ENCODE measurements at regions of chr12 and their contacts with region 1.

Region 1: GRCh38 chr12:12786716-12787601 is 1.5 kb downstream of the APOLD1 start:
- DNase-seq: peak; percentile 75
- H3K4me3 Mint-ChIP-seq: peak overlapping the region; percentile 81
- H3K27ac Mint-ChIP-seq: peak overlapping the region; percentile 75
- H3K4me1 Mint-ChIP-seq: peaks cover 5% of the 10 kb centered on the region
- H3K27me3 Mint-ChIP-seq: no peaks in the 10 kb centered on the region
- CTCF ChIP-seq: peak; percentile 17

Region 2: DNA sequence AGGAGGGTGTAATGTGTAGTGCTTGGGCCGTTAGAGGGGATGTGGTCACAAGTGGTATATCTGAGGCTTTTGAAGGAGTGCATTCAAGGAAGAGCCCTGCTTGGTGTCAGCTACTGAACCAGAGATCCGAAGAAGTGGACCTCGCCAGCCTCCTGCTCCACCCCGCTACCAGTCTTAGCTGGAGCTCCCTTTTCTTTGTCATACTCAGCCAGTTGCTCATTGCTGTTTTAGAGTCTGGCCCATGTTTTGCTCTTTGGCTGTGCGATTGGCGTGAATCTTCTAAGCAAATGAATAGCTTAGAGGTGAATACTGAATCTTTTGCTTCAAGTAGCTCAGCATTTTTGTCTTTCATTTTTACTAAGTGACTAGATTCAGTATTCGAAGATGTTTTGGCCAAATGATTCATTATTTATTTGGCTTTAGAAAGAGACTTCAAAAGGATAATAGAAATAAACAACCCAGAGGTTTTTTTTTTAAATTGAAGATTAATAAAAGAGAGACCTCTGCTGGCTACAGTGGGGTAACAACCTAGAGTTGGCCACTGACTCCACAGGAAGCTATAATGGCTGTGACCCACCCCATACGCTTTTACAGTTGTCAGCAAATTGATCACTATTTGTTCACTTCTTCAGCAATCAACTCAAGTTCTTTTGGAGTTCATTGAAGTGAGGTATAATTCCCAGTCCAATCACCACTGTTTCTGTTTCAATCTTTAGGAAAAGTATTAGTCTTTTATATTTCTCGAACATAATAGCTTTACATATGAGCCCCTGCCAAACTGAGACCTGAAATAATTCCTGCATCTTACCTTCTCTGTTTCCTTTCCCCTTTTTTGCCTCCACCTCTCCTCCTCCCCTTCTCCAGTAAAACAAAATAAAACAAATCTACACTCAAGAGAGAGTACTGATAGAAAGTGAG is 49.9 kb before region 1 on chr12:
- CTCF ChIA-PET with region 1: interaction called, 12 read pairs
- POLR2A ChIA-PET with region 1: interaction called, 3 read pairs
- intact Hi-C with region 1: no loop called
- DNase-seq: peak; percentile 55
- H3K4me3 Mint-ChIP-seq: no peak overlapping the region
- H3K27ac Mint-ChIP-seq: peak overlapping the region; percentile 71
- H3K4me1 Mint-ChIP-seq: peaks cover 24% of the 10 kb centered on the region
- H3K27me3 Mint-ChIP-seq: no peaks in the 10 kb centered on the region
- CTCF ChIP-seq: peak; percentile 52

Region 3: GRCh38 chr12:12813120-12814101 is 26.5 kb after region 1 on chr12 and contains the start of gene DDX47:
- CTCF ChIA-PET with region 1: interaction called, 49 read pairs
- POLR2A ChIA-PET with region 1: interaction called, 45 read pairs
- intact Hi-C with region 1: loop called (anchors 1 kb)
- DNase-seq: peak; percentile 92
- H3K4me3 Mint-ChIP-seq: peak within 1 kb of the TSS; percentile 99
- H3K27ac Mint-ChIP-seq: peak within 1 kb of the TSS; percentile 99
- H3K4me1 Mint-ChIP-seq: peaks cover 27% of the 10 kb centered on the region
- H3K27me3 Mint-ChIP-seq: no peaks in the 10 kb centered on the region
- CTCF ChIP-seq: peak; percentile 90
- total RNA-seq, gene DDX47: 47.0 and 47.7 TPM in 2 replicates

Region 4: GRCh38 chr12:12890815-12891645 is 104.1 kb after region 1 on chr12 and contains the start of gene GPRC5A:
- CTCF ChIA-PET with region 1: interaction called, 28 read pairs
- POLR2A ChIA-PET with region 1: interaction called, 48 read pairs
- intact Hi-C with region 1: loop called (anchors 1 kb)
- DNase-seq: peak; percentile 97
- H3K4me3 Mint-ChIP-seq: peak within 1 kb of the TSS; percentile 82
- H3K27ac Mint-ChIP-seq: peak within 1 kb of the TSS; percentile 87
- H3K4me1 Mint-ChIP-seq: peaks cover 31% of the 10 kb centered on the region
- H3K27me3 Mint-ChIP-seq: no peaks in the 10 kb centered on the region
- CTCF ChIP-seq: peak; percentile 30
- total RNA-seq, gene GPRC5A: 24.1 and 42.1 TPM in 2 replicates

Region 5: GRCh38 chr12:12946686-12947355 is 159.9 kb after region 1 on chr12:
- CTCF ChIA-PET with region 1: no interaction called
- POLR2A ChIA-PET with region 1: no interaction called
- intact Hi-C with region 1: no loop called
- DNase-seq: no peak
- H3K4me3 Mint-ChIP-seq: no peak overlapping the region
- H3K27ac Mint-ChIP-seq: no peak overlapping the region
- H3K4me1 Mint-ChIP-seq: no peaks in the 10 kb centered on the region
- H3K27me3 Mint-ChIP-seq: no peaks in the 10 kb centered on the region
- CTCF ChIP-seq: no peak

Region 6: GRCh38 chr12:12983420-12984035 is 196.6 kb after region 1 on chr12:
- CTCF ChIA-PET with region 1: interaction called, 35 read pairs
- POLR2A ChIA-PET with region 1: interaction called, 4 read pairs
- intact Hi-C with region 1: loop called (anchors 1 kb)
- DNase-seq: peak; percentile 65
- H3K4me3 Mint-ChIP-seq: no peak overlapping the region
- H3K27ac Mint-ChIP-seq: peak overlapping the region; percentile 0
- H3K4me1 Mint-ChIP-seq: peaks cover 6% of the 10 kb centered on the region
- H3K27me3 Mint-ChIP-seq: no peaks in the 10 kb centered on the region
- CTCF ChIP-seq: peak; percentile 66

Measured in MCF 10A (cell line).